Transverse colon (tissue), 4 donors: ENCODE measurements at regions of chr4 and their contacts with region 1.

Region 1: GRCh38 chr4:41281038-41281634 is 24.4 kb downstream of the UCHL1 start:
- DNase-seq: peak; percentile 9
- H3K4me3 ChIP-seq: no peak overlapping the region
- H3K27ac ChIP-seq: no peak overlapping the region
- H3K4me1 ChIP-seq: no peaks in the 10 kb centered on the region
- H3K27me3 ChIP-seq: peaks cover 7% of the 10 kb centered on the region
- CTCF ChIP-seq: peak; percentile 77 to 90 (median 83)
- EP300 ChIP-seq: no peak
- POLR2A ChIP-seq: no peak

Region 2: GRCh38 chr4:41644288-41644914 is 363.3 kb after region 1 on chr4:
- in situ Hi-C with region 1: loop called in 2 of 4 experiments (anchors 10 kb)
- intact Hi-C with region 1: loop called (anchors 5 kb)
- DNase-seq: peak; percentile 75
- H3K4me3 ChIP-seq: peak overlapping the region in 1 of 4 donors; percentile 23
- H3K27ac ChIP-seq: no peak overlapping the region
- H3K4me1 ChIP-seq: peaks cover 0 to 15% (median 8%) of the 10 kb centered on the region in 4 donors
- H3K27me3 ChIP-seq: peaks cover 13% of the 10 kb centered on the region
- CTCF ChIP-seq: peak; percentile 67 to 88 (median 79)
- EP300 ChIP-seq: no peak
- POLR2A ChIP-seq: no peak

Region 3: GRCh38 chr4:41652971-41653370 is 371.8 kb after region 1 on chr4:
- in situ Hi-C with region 1: loop called (anchors 5 to 10 kb)
- intact Hi-C with region 1: loop called (anchors 5 kb)
- DNase-seq: no peak
- H3K4me3 ChIP-seq: no peak overlapping the region
- H3K27ac ChIP-seq: no peak overlapping the region
- H3K4me1 ChIP-seq: peaks cover 0 to 5% (median 2%) of the 10 kb centered on the region in 4 donors
- H3K27me3 ChIP-seq: no peaks in the 10 kb centered on the region
- CTCF ChIP-seq: no peak
- EP300 ChIP-seq: no peak
- POLR2A ChIP-seq: no peak

Region 4: DNA sequence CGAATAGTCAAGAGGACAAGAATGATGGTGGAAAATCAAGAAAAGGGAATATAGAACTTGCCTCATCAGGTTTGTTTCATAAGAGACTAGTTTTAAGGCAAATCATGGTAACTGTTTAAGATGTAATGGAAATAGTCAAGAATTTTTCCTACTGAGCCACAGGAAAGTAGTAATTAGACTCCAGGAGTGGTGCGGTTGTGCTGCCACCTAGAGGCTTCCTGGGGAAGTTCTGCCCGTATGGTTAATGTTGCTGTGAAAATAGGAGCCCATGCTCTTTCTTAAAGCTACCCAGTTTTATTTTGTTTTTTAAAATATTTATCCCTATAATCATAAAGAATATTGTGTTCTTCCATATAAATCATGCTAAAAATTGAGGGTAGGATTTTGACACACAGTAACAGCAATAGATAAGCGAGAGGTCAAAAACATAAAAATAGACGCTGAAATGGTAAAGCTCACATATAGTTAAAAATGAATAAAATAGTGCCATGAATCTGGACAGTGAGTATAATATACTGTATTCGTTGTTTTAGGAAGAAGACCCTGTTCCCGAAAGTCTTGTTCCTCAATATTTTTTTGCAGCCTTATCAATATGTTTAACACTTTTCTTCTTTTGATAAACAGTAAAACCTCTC is 380.4 kb after region 1 on chr4:
- in situ Hi-C with region 1: loop called in 1 of 4 experiments (anchors 10 kb)
- intact Hi-C with region 1: loop called (anchors 5 kb)
- DNase-seq: peak; percentile 54
- H3K4me3 ChIP-seq: no peak overlapping the region
- H3K27ac ChIP-seq: no peak overlapping the region
- H3K4me1 ChIP-seq: no peaks in the 10 kb centered on the region
- H3K27me3 ChIP-seq: no peaks in the 10 kb centered on the region
- CTCF ChIP-seq: peak; percentile 78 to 96 (median 94)
- EP300 ChIP-seq: no peak
- POLR2A ChIP-seq: no peak

Region 5: GRCh38 chr4:41882625-41883347 is 601.6 kb after region 1 on chr4:
- in situ Hi-C with region 1: loop called (anchors 10 to 25 kb)
- intact Hi-C with region 1: no loop called
- DNase-seq: no peak
- H3K4me3 ChIP-seq: peak overlapping the region in 3 of 4 donors; percentile 6 to 46 (median 23)
- H3K27ac ChIP-seq: no peak overlapping the region
- H3K4me1 ChIP-seq: peaks cover 6 to 23% (median 19%) of the 10 kb centered on the region in 4 donors
- H3K27me3 ChIP-seq: peaks cover 92% of the 10 kb centered on the region
- CTCF ChIP-seq: peak; percentile 68 to 95 (median 93)
- EP300 ChIP-seq: no peak
- POLR2A ChIP-seq: no peak

Region 6: GRCh38 chr4:41934815-41935651 is 653.9 kb after region 1 on chr4 and contains the start of gene TMEM33:
- in situ Hi-C with region 1: no loop called
- intact Hi-C with region 1: no loop called
- DNase-seq: peak; percentile 90
- H3K4me3 ChIP-seq: peak within 1 kb of the TSS; percentile 87 to 100 (median 98)
- H3K27ac ChIP-seq: peak within 1 kb of the TSS; percentile 85 to 94 (median 88)
- H3K4me1 ChIP-seq: peaks cover 7 to 32% (median 25%) of the 10 kb centered on the region in 4 donors
- H3K27me3 ChIP-seq: no peaks in the 10 kb centered on the region
- CTCF ChIP-seq: peak in 4 of 5 experiments; percentile 13 to 55 (median 26)
- EP300 ChIP-seq: no peak
- POLR2A ChIP-seq: peak; percentile 81
- total RNA-seq, gene TMEM33: 41.8 to 59.3 (median 54.9) TPM